CD4-positive, alpha-beta T cell (primary cell): ENCODE measurements at regions of chr7 and their contacts with region 1.

Region 1: DNA sequence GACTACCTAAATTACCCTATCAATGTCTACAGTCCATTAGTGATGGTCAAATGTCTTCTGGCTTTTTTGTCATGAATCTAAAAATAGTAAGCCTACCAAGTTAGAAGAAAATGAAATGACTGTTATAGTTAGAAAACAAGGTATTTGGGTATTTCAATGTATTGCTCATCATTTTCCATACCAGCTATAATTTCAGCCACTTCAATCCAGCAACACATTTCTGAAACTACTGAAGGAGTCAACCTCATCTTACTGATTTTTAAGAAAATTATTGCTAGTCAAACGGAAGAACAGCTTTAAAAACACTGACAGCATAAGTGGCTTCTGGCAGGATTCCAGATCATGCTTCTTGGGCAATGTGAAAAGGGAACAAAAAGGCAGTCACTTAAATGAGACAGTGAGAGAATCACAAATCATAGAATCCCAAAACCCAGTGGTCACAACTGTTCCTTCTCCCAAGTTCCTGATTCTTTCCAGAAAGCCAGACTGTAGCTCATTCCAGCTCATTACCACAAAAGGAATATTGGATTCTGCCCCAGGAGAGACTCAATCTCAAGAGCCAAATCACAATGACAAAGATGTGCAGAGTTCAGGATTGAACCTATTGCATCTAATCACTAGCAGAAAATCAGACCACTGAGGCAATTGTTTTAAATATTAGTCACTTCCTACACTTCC is 61.2 kb upstream of the LRRN3 start:
- DNase-seq: peak in 5 of 14 experiments; percentile 17 to 66 (median 56)
- ATAC-seq: no peak
- H3K4me3 ChIP-seq: no peak overlapping the region
- H3K4me3 Mint-ChIP-seq: peak overlapping the region; percentile 36
- H3K27ac ChIP-seq: no peak overlapping the region
- H3K27ac Mint-ChIP-seq: peak overlapping the region; percentile 82
- H3K4me1 ChIP-seq: peaks cover 4% of the 10 kb centered on the region
- H3K4me1 Mint-ChIP-seq: peaks cover 56% of the 10 kb centered on the region
- H3K27me3 ChIP-seq: no peaks in the 10 kb centered on the region
- H3K27me3 Mint-ChIP-seq: no peaks in the 10 kb centered on the region
- CTCF ChIP-seq: no peak

Region 2: DNA sequence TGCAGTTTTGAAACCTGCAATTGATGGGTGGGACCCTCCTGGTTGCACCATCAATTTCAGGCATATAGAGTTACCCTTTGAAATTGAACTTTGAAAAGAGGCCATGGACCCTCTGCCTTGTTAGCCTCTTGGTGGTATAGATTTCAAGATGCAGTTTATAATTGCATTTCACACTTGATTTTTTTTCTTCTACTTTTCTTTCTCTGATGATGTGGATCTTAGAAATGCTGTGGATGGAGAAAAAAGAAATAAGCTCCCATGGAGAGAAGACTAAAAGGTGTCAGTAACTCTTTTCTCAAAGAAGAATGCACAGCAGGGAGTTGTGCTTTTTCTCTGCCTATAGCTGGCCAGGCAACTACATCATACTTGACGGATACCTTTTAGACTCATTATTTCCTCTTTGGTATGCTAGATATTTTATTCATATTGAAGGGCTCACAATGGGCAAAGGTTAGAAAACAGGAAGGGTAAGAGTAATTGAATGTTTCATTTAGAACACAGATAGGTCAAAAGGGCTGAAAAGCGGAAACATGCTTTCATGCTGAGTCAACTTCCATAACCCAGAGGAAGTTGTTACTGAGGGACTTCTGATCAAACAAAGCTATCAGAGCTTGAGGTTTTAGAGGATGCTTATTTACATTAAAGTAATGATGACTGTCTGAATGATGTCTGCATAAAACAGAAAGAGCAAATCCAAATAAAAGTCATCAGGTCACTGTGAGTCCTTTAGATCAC is 712.0 kb before region 1 on chr7:
- CTCF ChIA-PET with region 1: no interaction called
- POLR2A ChIA-PET with region 1: no interaction called
- intact Hi-C with region 1: no loop called
- DNase-seq: no peak
- ATAC-seq: no peak
- H3K4me3 ChIP-seq: no peak overlapping the region
- H3K4me3 Mint-ChIP-seq: no peak overlapping the region
- H3K27ac ChIP-seq: no peak overlapping the region
- H3K27ac Mint-ChIP-seq: no peak overlapping the region
- H3K4me1 ChIP-seq: no peaks in the 10 kb centered on the region
- H3K4me1 Mint-ChIP-seq: no peaks in the 10 kb centered on the region
- H3K27me3 ChIP-seq: no peaks in the 10 kb centered on the region
- H3K27me3 Mint-ChIP-seq: no peaks in the 10 kb centered on the region
- CTCF ChIP-seq: no peak

Region 3: GRCh38 chr7:110977127-110977737 is 52.5 kb before region 1 on chr7:
- CTCF ChIA-PET with region 1: no interaction called
- POLR2A ChIA-PET with region 1: no interaction called
- intact Hi-C with region 1: loop called in 1 of 2 experiments (anchors 5 kb)
- DNase-seq: peak in 3 of 14 experiments; percentile 34 to 38 (median 38)
- ATAC-seq: peak; percentile 64
- H3K4me3 ChIP-seq: no peak overlapping the region
- H3K4me3 Mint-ChIP-seq: peak overlapping the region; percentile 42
- H3K27ac ChIP-seq: no peak overlapping the region
- H3K27ac Mint-ChIP-seq: peak overlapping the region; percentile 80
- H3K4me1 ChIP-seq: no peaks in the 10 kb centered on the region
- H3K4me1 Mint-ChIP-seq: peaks cover 47% of the 10 kb centered on the region
- H3K27me3 ChIP-seq: no peaks in the 10 kb centered on the region
- H3K27me3 Mint-ChIP-seq: no peaks in the 10 kb centered on the region
- CTCF ChIP-seq: no peak

Region 4: DNA sequence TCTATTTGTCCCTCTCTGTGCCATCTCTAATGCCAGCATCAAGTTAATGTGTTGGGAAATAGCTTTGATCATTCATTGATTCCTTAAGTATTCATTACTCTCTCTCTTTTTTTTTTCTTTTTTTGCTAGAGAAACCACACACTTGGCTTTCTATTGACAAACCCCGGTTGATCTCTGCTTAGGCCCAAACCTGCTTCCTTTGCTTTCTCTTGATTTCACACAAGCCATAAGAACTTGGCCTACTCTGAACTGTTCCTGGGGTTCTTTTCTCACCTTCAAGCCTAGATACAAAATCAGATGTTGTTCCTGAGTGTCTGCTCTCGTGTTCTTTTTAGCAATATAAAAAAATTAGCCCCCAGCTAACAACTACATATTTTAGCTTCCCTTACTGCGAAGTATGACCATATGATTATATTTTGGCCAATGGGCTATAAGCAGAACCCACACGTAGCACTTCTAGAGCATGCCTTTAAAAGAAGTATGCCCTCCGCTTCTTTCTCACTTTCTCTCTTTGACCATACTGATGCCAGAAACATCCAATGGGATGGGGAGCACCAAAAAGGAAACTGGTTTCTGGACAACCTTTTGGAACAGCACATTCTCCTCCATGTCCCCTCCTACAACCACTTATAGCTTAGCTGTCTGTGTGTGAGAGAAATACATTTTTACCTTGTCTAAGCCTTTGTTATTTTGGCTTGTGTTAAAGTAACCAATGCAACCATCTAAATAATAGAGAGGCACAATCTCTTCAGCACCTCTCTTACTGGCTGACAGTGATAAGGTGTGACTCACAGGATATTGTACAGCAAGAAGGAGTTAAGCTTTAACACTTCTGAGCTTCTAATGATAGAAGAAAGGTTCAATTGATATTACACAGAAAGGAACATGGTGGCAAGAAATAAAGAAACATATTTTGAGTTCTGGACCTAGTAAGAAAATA is 35.4 kb before region 1 on chr7:
- CTCF ChIA-PET with region 1: no interaction called
- POLR2A ChIA-PET with region 1: interaction called, 3 read pairs
- intact Hi-C with region 1: loop called in 1 of 2 experiments (anchors 5 kb)
- DNase-seq: no peak
- ATAC-seq: peak; percentile 86
- H3K4me3 ChIP-seq: no peak overlapping the region
- H3K4me3 Mint-ChIP-seq: peak overlapping the region; percentile 18
- H3K27ac ChIP-seq: peak overlapping the region in 1 of 2 donors; percentile 1
- H3K27ac Mint-ChIP-seq: peak overlapping the region; percentile 82
- H3K4me1 ChIP-seq: peaks cover 3% of the 10 kb centered on the region
- H3K4me1 Mint-ChIP-seq: peaks cover 43% of the 10 kb centered on the region
- H3K27me3 ChIP-seq: no peaks in the 10 kb centered on the region
- H3K27me3 Mint-ChIP-seq: no peaks in the 10 kb centered on the region
- CTCF ChIP-seq: no peak

Region 5: GRCh38 chr7:111012799-111013675 is 16.7 kb before region 1 on chr7:
- CTCF ChIA-PET with region 1: no interaction called
- POLR2A ChIA-PET with region 1: interaction called, 32 read pairs
- intact Hi-C with region 1: loop called in 1 of 2 experiments (anchors 1 kb)
- DNase-seq: peak in 10 of 14 experiments; percentile 6 to 74 (median 16)
- ATAC-seq: peak; percentile 87
- H3K4me3 ChIP-seq: peak overlapping the region; percentile 35
- H3K4me3 Mint-ChIP-seq: peak overlapping the region; percentile 69
- H3K27ac ChIP-seq: peak overlapping the region; percentile 66 to 80
- H3K27ac Mint-ChIP-seq: no peak overlapping the region
- H3K4me1 ChIP-seq: peaks cover 19% of the 10 kb centered on the region
- H3K4me1 Mint-ChIP-seq: peaks cover 36% of the 10 kb centered on the region
- H3K27me3 ChIP-seq: no peaks in the 10 kb centered on the region
- H3K27me3 Mint-ChIP-seq: no peaks in the 10 kb centered on the region
- CTCF ChIP-seq: no peak

Region 6: DNA sequence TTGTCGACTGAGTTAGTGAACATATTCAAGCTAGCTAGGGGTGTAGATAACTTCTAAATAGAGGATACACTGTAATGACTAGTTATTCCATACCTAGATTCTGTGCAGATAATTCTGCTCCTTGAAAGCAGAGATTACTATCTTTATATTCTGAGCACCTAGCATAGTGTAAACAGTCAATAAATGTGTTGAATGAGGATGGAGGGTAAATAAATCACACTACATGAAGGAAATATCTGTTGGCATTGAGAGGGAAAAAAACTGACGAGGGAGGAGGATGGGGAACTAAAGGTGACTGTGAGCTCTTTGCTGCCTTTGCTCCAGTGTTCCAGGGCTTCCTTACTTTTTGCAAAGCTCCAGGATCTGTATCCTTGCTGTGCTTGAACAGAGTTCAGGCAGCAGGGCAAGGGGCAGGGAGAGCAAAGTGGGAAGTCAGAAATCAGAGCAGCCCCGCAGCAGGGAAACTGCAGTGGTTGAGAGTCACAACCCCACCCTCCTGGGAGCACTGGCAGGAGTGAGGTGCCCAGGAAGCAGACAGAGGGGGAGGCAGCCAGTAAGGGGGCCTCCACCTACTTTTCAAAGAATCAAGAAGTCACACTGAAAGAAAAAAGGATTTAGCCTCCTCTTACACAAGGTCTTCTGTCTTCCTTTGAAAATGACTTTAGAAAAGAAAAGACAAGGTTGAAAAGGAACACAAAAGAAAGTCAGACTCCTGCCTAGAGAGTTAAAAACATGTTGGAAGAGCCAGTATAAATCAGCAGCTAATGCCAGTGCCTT is 10.6 kb before region 1 on chr7:
- CTCF ChIA-PET with region 1: no interaction called
- POLR2A ChIA-PET with region 1: interaction called, 32 read pairs
- intact Hi-C with region 1: loop called in 1 of 2 experiments (anchors 1 kb)
- DNase-seq: peak in 2 of 14 experiments; percentile 6 to 53
- ATAC-seq: peak; percentile 67
- H3K4me3 ChIP-seq: no peak overlapping the region
- H3K4me3 Mint-ChIP-seq: peak overlapping the region; percentile 14
- H3K27ac ChIP-seq: peak overlapping the region in 1 of 2 donors; percentile 13
- H3K27ac Mint-ChIP-seq: peak overlapping the region; percentile 72
- H3K4me1 ChIP-seq: peaks cover 15% of the 10 kb centered on the region
- H3K4me1 Mint-ChIP-seq: peaks cover 82% of the 10 kb centered on the region
- H3K27me3 ChIP-seq: no peaks in the 10 kb centered on the region
- H3K27me3 Mint-ChIP-seq: no peaks in the 10 kb centered on the region
- CTCF ChIP-seq: no peak

Region 7: DNA sequence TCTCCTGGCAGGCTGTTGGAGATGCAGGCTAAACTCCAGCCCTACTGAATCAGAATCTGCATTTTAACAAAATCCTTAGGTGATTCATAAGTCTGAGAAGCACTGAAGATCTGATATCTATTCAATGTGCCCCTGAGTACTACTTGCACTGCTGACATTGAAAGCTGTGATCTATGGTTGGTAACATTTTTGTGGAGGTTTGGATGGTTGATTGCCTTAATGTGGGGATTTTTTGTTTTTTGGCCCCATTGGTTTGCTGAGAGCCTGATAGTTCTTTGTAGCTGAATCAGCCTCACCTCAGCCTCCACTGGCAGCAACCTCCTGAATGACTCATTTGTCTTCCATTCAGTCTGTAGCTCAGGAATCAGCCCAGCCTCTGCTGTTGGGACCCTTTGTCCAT is 46.5 kb after region 1 on chr7:
- CTCF ChIA-PET with region 1: no interaction called
- POLR2A ChIA-PET with region 1: interaction called, 63 read pairs
- intact Hi-C with region 1: loop called in 1 of 2 experiments (anchors 10 kb)
- DNase-seq: peak in 1 of 14 experiments; percentile 49
- ATAC-seq: no peak
- H3K4me3 ChIP-seq: no peak overlapping the region
- H3K4me3 Mint-ChIP-seq: no peak overlapping the region
- H3K27ac ChIP-seq: no peak overlapping the region
- H3K27ac Mint-ChIP-seq: no peak overlapping the region
- H3K4me1 ChIP-seq: peaks cover under 1% of the 10 kb centered on the region
- H3K4me1 Mint-ChIP-seq: peaks cover 62% of the 10 kb centered on the region
- H3K27me3 ChIP-seq: no peaks in the 10 kb centered on the region
- H3K27me3 Mint-ChIP-seq: no peaks in the 10 kb centered on the region
- CTCF ChIP-seq: no peak

Region 8: GRCh38 chr7:111083413-111083812 is 53.7 kb after region 1 on chr7:
- CTCF ChIA-PET with region 1: no interaction called
- POLR2A ChIA-PET with region 1: interaction called, 63 read pairs
- intact Hi-C with region 1: loop called (anchors 1 to 10 kb)
- DNase-seq: peak in 10 of 14 experiments; percentile 16 to 91 (median 40)
- ATAC-seq: peak; percentile 95
- H3K4me3 ChIP-seq: peak overlapping the region; percentile 2
- H3K4me3 Mint-ChIP-seq: peak overlapping the region; percentile 47
- H3K27ac ChIP-seq: peak overlapping the region; percentile 38 to 42
- H3K27ac Mint-ChIP-seq: peak overlapping the region; percentile 73
- H3K4me1 ChIP-seq: peaks cover 20% of the 10 kb centered on the region
- H3K4me1 Mint-ChIP-seq: peaks cover 77% of the 10 kb centered on the region
- H3K27me3 ChIP-seq: no peaks in the 10 kb centered on the region
- H3K27me3 Mint-ChIP-seq: no peaks in the 10 kb centered on the region
- CTCF ChIP-seq: no peak

Region 9: DNA sequence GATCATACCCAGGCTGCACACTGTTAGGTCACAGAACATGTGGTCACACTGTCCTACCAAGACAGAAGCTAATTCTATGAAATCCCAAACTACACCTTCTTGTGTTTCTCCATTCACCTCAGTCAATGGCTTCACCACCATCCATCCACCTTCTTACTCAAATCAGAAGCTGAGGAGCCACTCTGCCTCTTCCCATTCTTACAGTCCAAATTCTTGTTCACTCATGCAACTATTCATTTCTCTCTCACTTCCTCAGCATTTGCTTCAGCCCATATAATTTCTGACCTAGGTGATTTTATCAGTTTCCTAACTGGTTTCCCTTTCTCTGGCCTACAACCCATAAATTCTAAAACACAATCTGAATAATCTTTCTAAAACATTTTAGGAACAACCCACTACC is 290.4 kb after region 1 on chr7:
- CTCF ChIA-PET with region 1: no interaction called
- POLR2A ChIA-PET with region 1: no interaction called
- intact Hi-C with region 1: no loop called
- DNase-seq: no peak
- ATAC-seq: no peak
- H3K4me3 ChIP-seq: no peak overlapping the region
- H3K4me3 Mint-ChIP-seq: no peak overlapping the region
- H3K27ac ChIP-seq: no peak overlapping the region
- H3K27ac Mint-ChIP-seq: no peak overlapping the region
- H3K4me1 ChIP-seq: no peaks in the 10 kb centered on the region
- H3K4me1 Mint-ChIP-seq: no peaks in the 10 kb centered on the region
- H3K27me3 ChIP-seq: no peaks in the 10 kb centered on the region
- H3K27me3 Mint-ChIP-seq: no peaks in the 10 kb centered on the region
- CTCF ChIP-seq: no peak

Region 10: GRCh38 chr7:112422842-112423496 is 1393.3 kb after region 1 on chr7:
- CTCF ChIA-PET with region 1: no interaction called
- POLR2A ChIA-PET with region 1: no interaction called
- intact Hi-C with region 1: no loop called
- DNase-seq: peak in 3 of 14 experiments; percentile 17 to 36 (median 21)
- ATAC-seq: no peak
- H3K4me3 ChIP-seq: no peak overlapping the region
- H3K4me3 Mint-ChIP-seq: no peak overlapping the region
- H3K27ac ChIP-seq: no peak overlapping the region
- H3K27ac Mint-ChIP-seq: no peak overlapping the region
- H3K4me1 ChIP-seq: peaks cover 15% of the 10 kb centered on the region
- H3K4me1 Mint-ChIP-seq: peaks cover 24% of the 10 kb centered on the region
- H3K27me3 ChIP-seq: no peaks in the 10 kb centered on the region
- H3K27me3 Mint-ChIP-seq: no peaks in the 10 kb centered on the region
- CTCF ChIP-seq: no peak